MCF 10A (cell line): ENCODE measurements at regions of chr1 and their contacts with region 1.

Region 1: GRCh38 chr1:225097175-225097574 is 167.7 kb downstream of the DNAH14 start:
- DNase-seq: no peak
- H3K4me3 Mint-ChIP-seq: no peak overlapping the region
- H3K27ac Mint-ChIP-seq: no peak overlapping the region
- H3K4me1 Mint-ChIP-seq: no peaks in the 10 kb centered on the region
- H3K27me3 Mint-ChIP-seq: no peaks in the 10 kb centered on the region
- CTCF ChIP-seq: no peak

Region 2: GRCh38 chr1:224781800-224782199 is 315.4 kb before region 1 on chr1:
- CTCF ChIA-PET with region 1: no interaction called
- POLR2A ChIA-PET with region 1: no interaction called
- intact Hi-C with region 1: loop called (anchors 5 kb)
- DNase-seq: no peak
- H3K4me3 Mint-ChIP-seq: no peak overlapping the region
- H3K27ac Mint-ChIP-seq: no peak overlapping the region
- H3K4me1 Mint-ChIP-seq: peaks cover 12% of the 10 kb centered on the region
- H3K27me3 Mint-ChIP-seq: no peaks in the 10 kb centered on the region
- CTCF ChIP-seq: no peak